ENCODE measurements at regions of chr6 and their contacts with region 1.

Region 1: GRCh38 chr6:82363351-82364086 is at the start of gene TPBG:
- DNase-seq: peak; percentile 85
- H3K4me3 Mint-ChIP-seq: peak within 1 kb of the TSS; percentile 87
- H3K27ac Mint-ChIP-seq: peak within 1 kb of the TSS; percentile 94
- H3K4me1 Mint-ChIP-seq: peaks cover 32% of the 10 kb centered on the region
- H3K27me3 Mint-ChIP-seq: no peaks in the 10 kb centered on the region
- CTCF ChIP-seq: peak; percentile 23
- total RNA-seq, gene TPBG: 72.9 and 96.9 TPM in 2 replicates

Region 2: DNA sequence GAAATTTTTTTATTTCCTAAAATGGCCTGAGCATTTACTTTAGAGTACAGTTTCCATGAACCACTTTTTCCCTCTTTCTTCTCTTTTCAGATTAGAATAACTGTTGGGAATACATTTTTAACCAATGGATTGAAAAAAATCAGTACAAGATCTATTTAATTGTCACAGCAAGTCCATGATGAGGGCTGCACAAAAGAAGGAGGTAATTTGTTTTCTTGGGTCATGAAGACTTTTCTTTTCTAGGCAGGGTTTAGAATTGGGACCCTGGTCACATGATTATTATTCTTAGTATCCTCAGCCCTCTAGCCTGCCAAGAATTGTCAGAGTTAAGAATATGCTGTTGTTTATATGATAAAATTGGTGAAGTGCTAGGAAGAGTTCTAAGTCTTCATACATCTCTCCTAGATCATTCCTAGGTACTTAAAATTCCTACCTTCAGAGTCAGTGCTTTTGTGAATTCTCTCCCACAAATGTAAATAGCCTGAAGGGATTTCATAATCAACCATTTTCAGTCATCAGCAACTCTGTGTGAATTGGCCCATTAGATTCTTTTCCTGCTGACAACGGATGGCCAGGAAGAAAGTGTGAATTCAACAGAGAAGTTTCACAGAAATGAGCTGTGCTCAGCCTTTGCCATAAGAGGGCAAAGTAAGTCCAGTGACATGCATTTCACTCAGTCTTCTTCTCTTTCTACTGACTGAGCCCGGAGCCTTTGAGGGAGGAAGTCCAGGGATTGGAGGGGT is 32.3 kb before region 1 on chr6:
- CTCF ChIA-PET with region 1: interaction called, 8 read pairs
- POLR2A ChIA-PET with region 1: interaction called, 11 read pairs
- intact Hi-C with region 1: loop called (anchors 1 kb)
- DNase-seq: peak; percentile 94
- H3K4me3 Mint-ChIP-seq: peak overlapping the region; percentile 68
- H3K27ac Mint-ChIP-seq: peak overlapping the region; percentile 91
- H3K4me1 Mint-ChIP-seq: peaks cover 34% of the 10 kb centered on the region
- H3K27me3 Mint-ChIP-seq: no peaks in the 10 kb centered on the region
- CTCF ChIP-seq: peak; percentile 38

Region 3: DNA sequence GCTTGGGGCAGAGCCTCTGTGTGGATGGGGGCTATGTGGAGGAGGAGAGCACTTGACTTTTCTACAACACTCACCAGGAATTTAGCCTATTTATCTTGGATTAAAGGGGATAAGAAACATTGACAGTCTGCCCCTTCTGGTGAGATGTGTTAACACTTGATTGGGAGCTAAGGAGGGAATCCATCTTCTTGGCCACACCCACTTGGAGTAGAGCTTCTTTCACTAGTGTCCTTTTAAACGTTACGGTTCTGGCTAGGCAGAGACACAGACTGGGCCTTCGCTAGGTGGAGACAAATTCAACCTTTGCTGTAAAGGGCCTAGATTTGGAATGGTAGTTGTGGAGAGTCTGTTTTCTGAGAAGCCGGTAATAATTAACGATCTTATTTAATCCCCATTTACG is 15.4 kb before region 1 on chr6:
- CTCF ChIA-PET with region 1: interaction called, 6 read pairs
- POLR2A ChIA-PET with region 1: interaction called, 17 read pairs
- intact Hi-C with region 1: no loop called
- DNase-seq: no peak
- H3K4me3 Mint-ChIP-seq: no peak overlapping the region
- H3K27ac Mint-ChIP-seq: no peak overlapping the region
- H3K4me1 Mint-ChIP-seq: no peaks in the 10 kb centered on the region
- H3K27me3 Mint-ChIP-seq: no peaks in the 10 kb centered on the region
- CTCF ChIP-seq: no peak

Region 4: DNA sequence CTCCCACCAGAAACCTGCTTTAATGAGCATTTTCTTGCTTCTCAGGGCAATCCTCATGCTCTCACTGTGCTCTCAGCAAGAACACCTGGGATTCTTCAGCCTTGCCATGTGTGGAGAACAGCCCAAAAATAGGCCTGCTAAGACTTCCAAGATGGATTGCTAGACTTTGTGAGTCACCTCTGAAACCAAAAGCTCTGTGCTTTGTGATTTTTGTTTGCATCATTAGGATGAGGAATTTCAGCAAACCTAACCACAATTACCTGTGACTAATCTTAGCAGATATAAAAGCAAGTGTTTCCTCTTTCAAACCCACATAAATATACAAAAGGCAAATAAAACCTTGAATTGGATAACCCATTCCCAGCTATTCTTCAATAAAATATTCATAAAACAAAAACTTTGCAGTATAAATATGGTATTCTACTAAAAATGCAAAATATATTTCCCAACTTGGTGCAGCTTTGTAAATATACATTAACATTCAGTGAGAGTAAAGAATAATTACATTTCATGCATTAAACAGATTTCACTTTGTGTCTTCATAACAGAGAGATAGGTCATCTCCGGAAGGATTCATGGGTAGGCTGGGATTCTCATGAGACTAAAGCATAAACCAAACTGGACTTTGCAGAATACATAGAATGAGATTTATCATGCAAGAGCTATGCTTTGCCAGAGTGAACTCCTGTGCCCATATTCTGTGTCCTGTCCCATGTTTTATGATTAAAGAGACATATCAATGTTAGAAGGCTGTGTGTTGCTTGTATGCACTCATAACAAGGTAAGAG is 33.6 kb after region 1 on chr6:
- CTCF ChIA-PET with region 1: no interaction called
- POLR2A ChIA-PET with region 1: interaction called, 65 read pairs
- intact Hi-C with region 1: loop called (anchors 2 kb)
- DNase-seq: peak; percentile 96
- H3K4me3 Mint-ChIP-seq: peak overlapping the region; percentile 67
- H3K27ac Mint-ChIP-seq: peak overlapping the region; percentile 70
- H3K4me1 Mint-ChIP-seq: peaks cover 45% of the 10 kb centered on the region
- H3K27me3 Mint-ChIP-seq: no peaks in the 10 kb centered on the region
- CTCF ChIP-seq: no peak

Region 5: GRCh38 chr6:82541306-82541705 is 177.8 kb after region 1 on chr6:
- CTCF ChIA-PET with region 1: no interaction called
- POLR2A ChIA-PET with region 1: interaction called, 4 read pairs
- intact Hi-C with region 1: loop called (anchors 2 kb)
- DNase-seq: no peak
- H3K4me3 Mint-ChIP-seq: no peak overlapping the region
- H3K27ac Mint-ChIP-seq: no peak overlapping the region
- H3K4me1 Mint-ChIP-seq: no peaks in the 10 kb centered on the region
- H3K27me3 Mint-ChIP-seq: no peaks in the 10 kb centered on the region
- CTCF ChIP-seq: no peak

Region 6: GRCh38 chr6:83057705-83058321 is 694.3 kb after region 1 on chr6:
- CTCF ChIA-PET with region 1: interaction called, 3 read pairs
- POLR2A ChIA-PET with region 1: interaction called, 4 read pairs
- intact Hi-C with region 1: loop called (anchors 1 kb)
- DNase-seq: peak; percentile 68
- H3K4me3 Mint-ChIP-seq: no peak overlapping the region
- H3K27ac Mint-ChIP-seq: no peak overlapping the region
- H3K4me1 Mint-ChIP-seq: peaks cover 5% of the 10 kb centered on the region
- H3K27me3 Mint-ChIP-seq: no peaks in the 10 kb centered on the region
- CTCF ChIP-seq: peak; percentile 73

Measured in MCF 10A (cell line).